ENCODE measurements at regions of chr16 and their contacts with region 1.

Region 1: DNA sequence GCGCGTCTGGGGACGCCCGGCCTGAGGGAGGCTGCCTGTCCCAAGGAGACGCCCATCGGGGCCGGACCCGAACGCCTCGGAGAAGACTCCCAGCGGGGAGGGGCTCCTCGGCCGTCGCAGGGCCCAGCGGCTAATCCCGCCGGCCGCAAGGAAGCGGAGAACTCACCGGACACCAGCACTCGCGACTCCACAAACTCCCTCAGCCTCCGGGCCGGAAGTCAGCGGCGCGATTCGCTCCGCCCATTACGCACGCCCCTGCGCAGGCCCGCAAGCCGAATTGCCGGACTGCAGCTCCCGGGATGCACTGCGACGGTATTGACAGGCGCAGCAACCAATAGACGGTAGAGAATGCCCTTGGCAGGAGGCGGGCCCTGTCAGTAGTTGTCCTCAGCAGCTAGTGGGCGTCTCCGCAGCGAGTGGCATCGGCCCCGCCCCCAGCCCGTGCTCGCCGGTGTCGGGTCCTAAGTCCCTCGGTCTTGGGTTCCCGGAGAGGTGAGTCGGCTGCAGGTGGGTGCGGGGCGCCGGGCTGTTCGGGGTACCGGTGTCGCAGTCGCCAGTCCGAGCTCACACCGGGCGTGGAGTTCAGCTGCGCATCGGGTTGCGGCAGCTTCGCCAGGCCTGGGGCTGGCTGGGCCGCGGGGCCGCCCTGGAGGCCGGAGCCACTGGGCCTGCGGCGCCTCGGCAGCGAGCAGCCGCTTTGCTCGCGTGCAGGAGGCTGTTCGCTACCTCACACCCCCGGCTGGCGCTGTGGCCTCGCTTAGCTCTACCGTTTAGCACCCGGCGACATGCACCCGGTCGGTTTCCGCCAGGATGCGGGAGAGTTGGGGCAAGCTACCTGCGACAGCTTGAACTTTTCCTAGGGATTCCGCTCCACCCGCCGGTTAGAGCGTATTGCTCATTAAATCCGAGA is at the starts of genes ZNF174 and ZSCAN32:
- DNase-seq: peak; percentile 99
- ATAC-seq: peak; percentile 99 to 100 (median 100)
- H3K4me3 ChIP-seq: peak within 1 kb of the TSS; percentile 98
- H3K27ac ChIP-seq: peak within 1 kb of the TSS; percentile 90
- H3K4me1 ChIP-seq: peaks cover 12% of the 10 kb centered on the region
- H3K27me3 ChIP-seq: no peaks in the 10 kb centered on the region
- CTCF ChIP-seq: no peak
- total RNA-seq, gene ZNF174: 6.2 to 8.4 (median 7.6) TPM
- total RNA-seq, gene ZSCAN32: 4.7 to 9.5 (median 6.2) TPM

Region 2: DNA sequence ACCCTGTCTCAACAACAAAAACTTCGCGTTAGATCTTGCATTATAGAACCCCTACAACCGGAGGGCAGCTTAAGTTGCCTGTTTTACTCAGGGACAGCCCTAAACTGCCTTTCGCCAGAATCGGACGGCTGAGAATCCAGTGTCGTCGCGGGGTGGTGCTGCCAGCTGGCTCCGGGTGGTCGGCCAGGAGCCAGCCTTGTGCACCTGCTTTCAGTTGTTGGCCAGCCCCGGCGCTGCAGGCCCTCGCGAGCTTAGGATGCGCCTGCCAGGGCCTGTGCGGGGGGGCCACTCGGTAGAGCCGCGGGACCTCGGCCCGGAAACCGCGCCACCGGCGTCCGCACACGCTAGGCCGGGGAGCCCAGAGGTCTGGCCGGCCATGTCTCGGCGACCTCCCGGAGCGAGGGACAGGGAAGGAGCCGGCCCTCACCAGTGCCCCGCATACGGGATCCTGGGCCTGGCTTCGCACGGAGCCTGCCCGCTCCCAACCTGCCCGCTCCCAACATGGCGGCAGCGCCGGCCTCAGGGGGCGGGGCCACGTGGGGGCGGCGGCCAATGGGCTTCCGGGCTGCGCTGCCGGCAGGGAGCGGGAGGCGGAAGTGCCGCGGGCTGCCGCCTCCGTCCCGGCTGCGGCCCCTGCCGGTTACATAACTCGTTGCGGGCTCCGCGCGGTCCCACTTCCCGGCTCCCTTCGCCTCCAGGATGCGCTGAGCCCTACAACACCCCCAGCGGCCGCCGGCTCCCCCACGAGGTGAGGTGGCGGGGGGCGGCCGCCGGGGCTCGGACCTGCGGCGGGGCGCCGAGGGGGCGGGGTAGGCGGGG is 56.6 kb after region 1 on chr16:
- intact Hi-C with region 1: loop called (anchors 2 to 5 kb)
- DNase-seq: peak; percentile 93 to 97
- ATAC-seq: peak; percentile 93 to 97 (median 95)
- H3K4me3 ChIP-seq: peak overlapping the region; percentile 87
- H3K27ac ChIP-seq: peak overlapping the region; percentile 98
- H3K4me1 ChIP-seq: peaks cover 54% of the 10 kb centered on the region
- H3K27me3 ChIP-seq: no peaks in the 10 kb centered on the region
- CTCF ChIP-seq: peak; percentile 57

Region 3: DNA sequence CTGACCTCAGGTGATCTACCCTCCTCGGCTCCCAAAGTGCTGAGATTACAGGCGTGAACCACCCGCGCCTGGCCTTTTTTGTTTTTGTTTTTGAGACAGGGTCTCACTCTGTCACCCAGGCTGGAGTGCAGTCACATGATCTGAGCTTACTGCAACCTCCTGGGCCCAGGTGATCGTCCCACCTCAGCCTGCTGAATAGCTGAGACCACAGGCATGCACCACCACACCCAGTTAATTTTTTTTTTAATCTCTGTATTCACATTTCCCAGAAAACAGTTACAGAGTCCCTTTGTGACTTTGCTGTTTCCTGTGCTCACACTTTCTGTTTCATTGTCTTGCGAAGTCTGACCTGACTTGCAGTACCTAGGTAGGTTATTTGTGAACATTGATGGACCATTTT is 102.5 kb after region 1 on chr16:
- intact Hi-C with region 1: loop called in 1 of 2 experiments (anchors 2 kb)
- DNase-seq: no peak
- ATAC-seq: no peak
- H3K4me3 ChIP-seq: no peak overlapping the region
- H3K27ac ChIP-seq: no peak overlapping the region
- H3K4me1 ChIP-seq: peaks cover 7% of the 10 kb centered on the region
- H3K27me3 ChIP-seq: no peaks in the 10 kb centered on the region
- CTCF ChIP-seq: no peak